ENCODE measurements at regions of chr7 and their contacts with region 1.

Region 1: DNA sequence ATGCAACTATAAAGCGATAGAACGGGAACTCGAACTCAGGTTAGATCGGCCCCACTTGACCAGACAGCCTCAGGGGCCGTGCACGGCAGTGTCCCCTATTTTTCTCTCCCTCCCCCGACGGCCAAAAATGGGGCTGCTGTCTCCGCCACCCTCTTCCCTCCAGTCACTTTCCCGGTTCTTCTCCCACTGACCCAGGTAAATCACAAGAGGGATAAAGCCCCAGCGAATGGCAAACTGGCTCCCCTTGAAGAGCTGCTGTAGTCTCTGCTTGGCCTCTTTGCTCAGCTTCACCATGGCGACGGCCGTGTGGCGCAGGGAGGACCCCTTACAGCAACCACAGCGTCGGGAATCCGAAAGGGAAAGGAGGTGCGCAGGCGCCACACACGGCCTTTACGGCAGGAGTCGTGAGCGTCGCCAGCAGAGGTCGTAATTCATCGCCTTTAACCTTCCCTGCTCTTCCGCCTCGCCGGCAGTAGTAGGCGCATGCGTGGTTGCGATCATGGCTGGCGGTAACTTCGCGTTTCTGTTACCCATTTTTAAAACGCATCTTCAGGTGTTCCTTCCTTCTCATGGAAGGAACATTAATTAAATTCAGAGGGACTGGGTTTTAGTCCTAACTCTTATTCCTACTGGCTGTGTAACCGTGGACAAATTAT is at the start of gene TOMM7:
- DNase-seq: peak; percentile 90 to 91
- ATAC-seq: peak; percentile 99
- total RNA-seq, gene TOMM7: 207 to 251 TPM

Region 2: GRCh38 chr7:22969010-22969431 is 146.4 kb after region 1 on chr7:
- intact Hi-C with region 1: no loop called
- DNase-seq: no peak
- ATAC-seq: no peak

Region 3: GRCh38 chr7:23013715-23014649 is 191.4 kb after region 1 on chr7 and contains the start of gene HYCC1:
- intact Hi-C with region 1: loop called in 1 of 2 experiments (anchors 10 kb)
- DNase-seq: peak; percentile 99
- ATAC-seq: peak; percentile 100
- total RNA-seq, gene HYCC1: 6.3 to 8.0 TPM